Vagina (tissue), 2 donors: ENCODE measurements at regions of chr12 and their contacts with region 1.

Region 1: GRCh38 chr12:47079468-47079980 is at the starts of genes AMIGO2 and PCED1B:
- DNase-seq: no peak
- H3K4me3 ChIP-seq: peak within 1 kb of the TSS; percentile 67 to 77
- H3K27ac ChIP-seq: peak within 1 kb of the TSS; percentile 96
- H3K4me1 ChIP-seq: peaks cover 53% of the 10 kb centered on the region
- H3K27me3 ChIP-seq: no peaks in the 10 kb centered on the region
- CTCF ChIP-seq: no peak
- POLR2A ChIP-seq: no peak
- total RNA-seq, gene AMIGO2: 20.4 TPM
- total RNA-seq, gene PCED1B: 6.9 TPM

Region 2: DNA sequence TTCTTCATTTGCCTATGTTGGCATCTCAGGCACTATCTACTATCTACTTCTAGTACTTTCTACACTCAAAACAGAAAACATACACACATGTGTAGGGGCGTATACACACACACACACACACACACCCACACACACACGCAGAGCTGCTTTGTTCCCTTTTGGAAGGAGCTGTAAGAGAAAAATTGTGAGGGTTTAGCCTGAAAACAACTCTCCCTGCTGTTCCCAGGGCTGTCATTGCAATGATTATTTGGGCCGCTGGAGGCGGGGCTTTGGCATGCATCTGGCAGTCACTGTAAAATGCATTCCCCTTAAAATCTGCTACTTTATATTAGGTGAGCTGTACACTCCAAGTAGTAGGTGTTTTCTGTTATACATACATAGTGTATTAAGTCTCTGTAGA is 677.9 kb before region 1 on chr12:
- intact Hi-C with region 1: loop called (anchors 5 kb)
- DNase-seq: no peak
- H3K4me3 ChIP-seq: no peak overlapping the region
- H3K27ac ChIP-seq: peak overlapping the region; percentile 37
- H3K4me1 ChIP-seq: peaks cover 47% of the 10 kb centered on the region
- H3K27me3 ChIP-seq: no peaks in the 10 kb centered on the region
- CTCF ChIP-seq: no peak
- POLR2A ChIP-seq: no peak

Region 3: GRCh38 chr12:46921048-46921763 is 158.3 kb before region 1 on chr12:
- intact Hi-C with region 1: no loop called
- DNase-seq: no peak
- H3K4me3 ChIP-seq: no peak overlapping the region
- H3K27ac ChIP-seq: peak overlapping the region; percentile 52
- H3K4me1 ChIP-seq: no peaks in the 10 kb centered on the region
- H3K27me3 ChIP-seq: no peaks in the 10 kb centered on the region
- CTCF ChIP-seq: no peak
- POLR2A ChIP-seq: no peak

Region 4: GRCh38 chr12:47377414-47378221 is 298.1 kb after region 1 on chr12:
- intact Hi-C with region 1: loop called (anchors 5 kb)
- DNase-seq: peak in 1 of 2 donors; percentile 99
- H3K4me3 ChIP-seq: no peak overlapping the region
- H3K27ac ChIP-seq: peak overlapping the region; percentile 51
- H3K4me1 ChIP-seq: peaks cover 8% of the 10 kb centered on the region
- H3K27me3 ChIP-seq: no peaks in the 10 kb centered on the region
- CTCF ChIP-seq: no peak
- POLR2A ChIP-seq: no peak